Common myeloid progenitor, CD34-positive (primary cell): ENCODE measurements at regions of chr16 and their contacts with region 1.

Region 1: DNA sequence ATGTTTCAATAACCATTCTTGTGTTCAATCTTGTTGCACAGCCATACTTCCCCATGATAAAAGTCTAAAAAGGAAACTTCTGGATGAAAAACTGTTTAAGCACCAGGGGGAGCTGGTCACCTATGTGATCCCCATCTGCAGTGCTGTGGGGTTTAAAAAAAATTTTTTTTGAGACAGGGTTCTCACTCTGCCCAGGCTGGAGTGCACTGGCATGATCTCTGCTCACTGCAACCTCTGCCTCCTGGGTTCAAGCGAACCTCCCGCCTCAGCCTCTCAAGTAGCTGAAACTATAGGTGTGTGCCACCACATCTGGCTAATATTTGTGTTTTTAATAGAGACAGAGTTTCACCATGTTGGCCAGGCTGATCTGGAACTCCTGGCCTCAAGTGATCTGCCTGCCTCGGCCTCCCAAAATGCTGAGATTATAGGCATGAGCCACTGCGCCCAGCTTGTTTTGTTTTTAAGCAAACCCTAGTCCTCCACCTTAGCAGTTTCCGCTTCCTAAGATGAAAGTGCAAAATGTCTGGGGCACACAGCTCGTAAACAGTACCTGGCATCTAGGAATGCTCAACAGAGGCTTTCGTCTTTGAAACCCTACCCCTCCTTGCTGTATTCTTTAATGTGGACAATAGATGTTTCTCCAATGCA is 25.4 kb downstream of the DNAJA2 start:
- DNase-seq: peak; percentile 59 to 78 (median 70)
- H3K4me3 ChIP-seq: no peak overlapping the region
- H3K27ac ChIP-seq: no peak overlapping the region
- H3K4me1 ChIP-seq: no peaks in the 10 kb centered on the region
- H3K27me3 ChIP-seq: no peaks in the 10 kb centered on the region

Region 2: GRCh38 chr16:46822270-46822669 is 125.8 kb before region 1 on chr16:
- CTCF ChIA-PET with region 1: no interaction called
- POLR2A ChIA-PET with region 1: no interaction called
- DNase-seq: no peak
- H3K4me3 ChIP-seq: no peak overlapping the region
- H3K27ac ChIP-seq: no peak overlapping the region
- H3K4me1 ChIP-seq: peaks cover 0 to 6% (median 3%) of the 10 kb centered on the region in 4 experiments
- H3K27me3 ChIP-seq: no peaks in the 10 kb centered on the region

Region 3: GRCh38 chr16:46920402-46921068 is 27.5 kb before region 1 on chr16:
- CTCF ChIA-PET with region 1: no interaction called
- POLR2A ChIA-PET with region 1: no interaction called
- DNase-seq: no peak
- H3K4me3 ChIP-seq: no peak overlapping the region
- H3K27ac ChIP-seq: no peak overlapping the region
- H3K4me1 ChIP-seq: no peaks in the 10 kb centered on the region
- H3K27me3 ChIP-seq: no peaks in the 10 kb centered on the region

Region 4: GRCh38 chr16:48164907-48165726 is 1217.1 kb after region 1 on chr16:
- CTCF ChIA-PET with region 1: interaction called, 11 read pairs
- POLR2A ChIA-PET with region 1: no interaction called
- DNase-seq: peak; percentile 28 to 48 (median 35)
- H3K4me3 ChIP-seq: peak overlapping the region in 1 of 7 experiments; percentile 28
- H3K27ac ChIP-seq: no peak overlapping the region
- H3K4me1 ChIP-seq: peaks cover 0 to 9% (median 4%) of the 10 kb centered on the region in 4 experiments
- H3K27me3 ChIP-seq: peaks cover 0 to 2% (median 0%) of the 10 kb centered on the region in 5 experiments